Endothelial cell of umbilical vein (primary cell): ENCODE measurements at regions of chr17 and their contacts with region 1.

Region 1: GRCh38 chr17:48878918-48879898 is 13.4 kb upstream of the ATP5MC1 start:
- DNase-seq: peak; percentile 76
- H3K4me3 ChIP-seq: no peak overlapping the region
- H3K27ac ChIP-seq: no peak overlapping the region
- H3K4me1 ChIP-seq: no peaks in the 10 kb centered on the region
- H3K27me3 ChIP-seq: no peaks in the 10 kb centered on the region
- CTCF ChIP-seq: peak; percentile 87 to 89
- POLR2A ChIP-seq: no peak

Region 2: DNA sequence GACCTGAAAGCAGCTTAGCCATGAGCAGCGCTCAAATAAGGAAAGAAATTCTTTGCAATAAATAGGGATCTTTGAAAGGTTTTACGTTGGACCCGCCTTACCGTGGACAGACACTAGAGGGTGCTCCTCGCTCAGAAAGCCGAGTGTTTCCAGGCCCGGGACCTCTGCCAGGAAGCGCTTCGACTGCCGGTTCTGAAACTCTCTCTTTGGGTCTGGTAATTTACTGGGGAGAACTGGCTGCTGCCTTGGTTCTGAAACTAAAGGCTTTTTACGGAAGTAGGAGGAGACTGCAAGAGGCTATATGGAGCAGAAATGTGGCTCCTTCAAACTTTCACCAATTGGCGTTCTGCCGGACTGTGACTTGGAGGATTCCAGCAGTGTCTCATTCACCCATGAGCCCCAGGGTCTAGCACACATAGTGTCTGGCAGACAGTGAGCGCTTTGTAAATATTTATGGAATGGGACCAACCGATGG is 207.5 kb before region 1 on chr17:
- CTCF ChIA-PET with region 1: interaction called, 182 read pairs
- POLR2A ChIA-PET with region 1: no interaction called
- dilution Hi-C with region 1: no loop called
- intact Hi-C with region 1: loop called (anchors 2 kb)
- DNase-seq: peak; percentile 77
- H3K4me3 ChIP-seq: peak overlapping the region in 1 of 3 experiments; percentile 43
- H3K27ac ChIP-seq: no peak overlapping the region
- H3K4me1 ChIP-seq: no peaks in the 10 kb centered on the region
- H3K27me3 ChIP-seq: peaks cover 12 to 21% of the 10 kb centered on the region in 2 experiments
- CTCF ChIP-seq: peak; percentile 79 to 88
- POLR2A ChIP-seq: no peak

Region 3: DNA sequence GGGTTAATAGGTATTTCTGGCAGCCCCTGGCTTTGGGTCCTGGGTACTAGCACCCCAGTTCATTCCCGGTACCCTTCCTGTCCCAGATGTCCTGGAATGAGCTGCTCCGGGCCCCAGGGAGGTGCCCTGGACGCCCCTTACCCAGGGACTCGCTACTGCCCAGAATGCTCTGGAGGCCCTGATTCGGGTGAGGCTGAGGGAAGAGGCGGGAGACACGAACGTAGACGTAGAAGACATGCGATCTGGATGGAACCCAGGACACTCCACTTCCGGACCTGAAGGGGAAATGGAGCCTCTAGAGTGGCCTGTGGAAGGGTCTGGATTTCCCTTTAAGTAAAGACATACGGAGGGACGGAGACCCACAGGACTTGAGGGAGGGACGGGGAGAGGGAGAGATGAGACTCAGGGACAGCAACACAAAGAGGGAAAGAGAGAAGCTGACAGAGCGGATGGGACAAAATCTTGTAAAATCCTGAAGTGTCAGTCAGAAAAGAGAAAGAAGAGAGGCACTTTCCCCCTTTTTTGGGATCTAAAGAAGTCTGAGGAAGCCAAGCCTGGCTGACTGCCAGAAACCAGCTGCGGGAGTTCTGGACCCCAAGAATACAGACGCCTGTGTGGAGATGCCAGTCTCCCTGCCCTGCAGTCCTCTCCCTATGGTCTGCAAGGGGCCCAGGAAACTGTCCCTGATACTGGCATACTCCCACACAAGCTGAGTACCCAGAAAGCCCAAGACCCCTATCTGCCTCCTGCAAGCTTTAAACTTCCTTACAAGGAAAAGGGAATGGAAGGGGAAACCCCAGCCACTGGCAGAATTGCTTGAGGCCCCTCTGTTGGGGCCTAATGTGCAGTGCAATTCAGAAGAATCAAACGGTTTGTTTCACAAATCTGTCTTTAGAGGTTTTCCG is 149.6 kb before region 1 on chr17:
- CTCF ChIA-PET with region 1: interaction called, 171 read pairs
- POLR2A ChIA-PET with region 1: no interaction called
- dilution Hi-C with region 1: no loop called
- intact Hi-C with region 1: loop called (anchors 1 kb)
- DNase-seq: no peak
- H3K4me3 ChIP-seq: no peak overlapping the region
- H3K27ac ChIP-seq: no peak overlapping the region
- H3K4me1 ChIP-seq: no peaks in the 10 kb centered on the region
- H3K27me3 ChIP-seq: peaks cover 92 to 97% of the 10 kb centered on the region in 2 experiments
- CTCF ChIP-seq: no peak
- POLR2A ChIP-seq: no peak

Region 4: GRCh38 chr17:48799069-48799723 is 80.0 kb before region 1 on chr17:
- CTCF ChIA-PET with region 1: interaction called, 1,186 read pairs
- POLR2A ChIA-PET with region 1: no interaction called
- dilution Hi-C with region 1: no loop called
- intact Hi-C with region 1: no loop called
- DNase-seq: no peak
- H3K4me3 ChIP-seq: no peak overlapping the region
- H3K27ac ChIP-seq: no peak overlapping the region
- H3K4me1 ChIP-seq: no peaks in the 10 kb centered on the region
- H3K27me3 ChIP-seq: peaks cover 2 to 5% of the 10 kb centered on the region in 2 experiments
- CTCF ChIP-seq: no peak
- POLR2A ChIP-seq: no peak

Region 5: DNA sequence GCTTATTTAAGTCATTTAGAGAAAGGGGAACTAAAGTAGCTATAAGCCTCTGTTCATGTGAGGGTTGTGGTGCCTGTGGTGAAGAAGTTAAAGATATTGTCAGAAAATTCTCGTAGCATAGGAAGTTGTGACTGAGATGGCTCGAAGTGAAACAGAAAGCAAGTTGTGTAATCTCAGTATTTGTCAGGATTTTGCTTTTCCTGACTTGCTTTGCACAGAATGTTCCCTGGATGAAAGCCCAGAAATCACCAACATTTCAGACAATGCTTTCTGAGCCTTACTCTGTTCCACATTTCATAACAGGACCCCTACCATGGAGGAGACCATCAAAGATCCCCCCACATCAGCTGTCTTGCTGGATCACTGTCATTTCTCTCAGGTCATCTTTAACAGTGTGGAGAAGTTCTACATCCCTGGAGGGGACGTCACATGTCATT is 37.8 kb before region 1 on chr17:
- CTCF ChIA-PET with region 1: interaction called, 18 read pairs
- POLR2A ChIA-PET with region 1: no interaction called
- dilution Hi-C with region 1: no loop called
- intact Hi-C with region 1: no loop called
- DNase-seq: peak; percentile 80
- H3K4me3 ChIP-seq: peak overlapping the region; percentile 18 to 75 (median 37)
- H3K27ac ChIP-seq: peak overlapping the region; percentile 60
- H3K4me1 ChIP-seq: peaks cover 18% of the 10 kb centered on the region
- H3K27me3 ChIP-seq: no peaks in the 10 kb centered on the region
- CTCF ChIP-seq: no peak
- POLR2A ChIP-seq: no peak

Region 6: DNA sequence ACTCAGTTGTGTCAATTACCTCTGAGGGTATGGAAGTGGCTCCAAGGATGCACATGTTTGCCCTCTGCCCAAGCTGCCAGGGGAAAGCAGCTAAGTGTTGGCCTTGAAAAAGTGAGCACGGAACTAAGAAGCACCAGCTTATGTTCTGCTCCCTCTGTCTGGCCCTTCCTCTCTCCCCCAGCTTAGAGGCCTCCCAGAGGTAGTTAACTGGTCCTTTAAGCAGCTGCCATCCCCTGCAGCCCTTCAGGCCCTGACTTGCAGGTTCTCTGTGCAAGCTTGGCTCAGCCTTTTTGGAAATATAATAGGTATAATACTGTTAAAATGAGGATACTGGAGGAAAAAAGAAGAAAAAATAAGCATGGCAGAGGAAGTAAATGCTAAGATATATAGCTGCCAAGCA is 22.0 kb after region 1 on chr17:
- CTCF ChIA-PET with region 1: interaction called, 18 read pairs
- POLR2A ChIA-PET with region 1: no interaction called
- dilution Hi-C with region 1: no loop called
- intact Hi-C with region 1: no loop called
- DNase-seq: no peak
- H3K4me3 ChIP-seq: no peak overlapping the region
- H3K27ac ChIP-seq: no peak overlapping the region
- H3K4me1 ChIP-seq: no peaks in the 10 kb centered on the region
- H3K27me3 ChIP-seq: no peaks in the 10 kb centered on the region
- CTCF ChIP-seq: no peak
- POLR2A ChIP-seq: no peak

Region 7: GRCh38 chr17:49093082-49093741 is 214.0 kb after region 1 on chr17:
- CTCF ChIA-PET with region 1: no interaction called
- POLR2A ChIA-PET with region 1: no interaction called
- dilution Hi-C with region 1: no loop called
- intact Hi-C with region 1: no loop called
- DNase-seq: no peak
- H3K4me3 ChIP-seq: no peak overlapping the region
- H3K27ac ChIP-seq: no peak overlapping the region
- H3K4me1 ChIP-seq: no peaks in the 10 kb centered on the region
- H3K27me3 ChIP-seq: no peaks in the 10 kb centered on the region
- CTCF ChIP-seq: no peak
- POLR2A ChIP-seq: no peak